ENCODE measurements at regions of chr10 and their contacts with region 1.

Region 1: GRCh38 chr10:100562008-100562711 is 26.4 kb downstream of the HIF1AN start:
- DNase-seq: peak; percentile 66 to 91 (median 76)
- ATAC-seq: peak; percentile 99
- H3K4me3 ChIP-seq: peak overlapping the region; percentile 32
- H3K4me3 Mint-ChIP-seq: peak overlapping the region; percentile 30
- H3K27ac ChIP-seq: no peak overlapping the region
- H3K27ac Mint-ChIP-seq: no peak overlapping the region
- H3K4me1 ChIP-seq: peaks cover 21% of the 10 kb centered on the region
- H3K4me1 Mint-ChIP-seq: peaks cover 23% of the 10 kb centered on the region
- H3K27me3 ChIP-seq: peaks cover 4 to 27% of the 10 kb centered on the region in 2 experiments
- H3K27me3 Mint-ChIP-seq: peaks cover 32% of the 10 kb centered on the region
- CTCF ChIP-seq: peak; percentile 93

Region 2: GRCh38 chr10:100728928-100729861 is 167.0 kb after region 1 on chr10:
- CTCF ChIA-PET with region 1: no interaction called
- POLR2A ChIA-PET with region 1: no interaction called
- intact Hi-C with region 1: loop called in 1 of 2 experiments (anchors 5 kb)
- DNase-seq: peak in 4 of 14 experiments; percentile 10 to 37 (median 23)
- ATAC-seq: peak; percentile 26
- H3K4me3 ChIP-seq: no peak overlapping the region
- H3K4me3 Mint-ChIP-seq: no peak overlapping the region
- H3K27ac ChIP-seq: no peak overlapping the region
- H3K27ac Mint-ChIP-seq: no peak overlapping the region
- H3K4me1 ChIP-seq: peaks cover 27% of the 10 kb centered on the region
- H3K4me1 Mint-ChIP-seq: peaks cover 30% of the 10 kb centered on the region
- H3K27me3 ChIP-seq: peaks cover 64 to 93% of the 10 kb centered on the region in 2 experiments
- H3K27me3 Mint-ChIP-seq: peaks cover 94% of the 10 kb centered on the region
- CTCF ChIP-seq: no peak

Region 3: GRCh38 chr10:100827819-100828737 is 265.9 kb after region 1 on chr10:
- CTCF ChIA-PET with region 1: no interaction called
- POLR2A ChIA-PET with region 1: no interaction called
- intact Hi-C with region 1: loop called in 1 of 2 experiments (anchors 5 kb)
- DNase-seq: peak in 5 of 14 experiments; percentile 17 to 51 (median 31)
- ATAC-seq: peak; percentile 22
- H3K4me3 ChIP-seq: peak overlapping the region; percentile 47
- H3K4me3 Mint-ChIP-seq: peak overlapping the region; percentile 89
- H3K27ac ChIP-seq: no peak overlapping the region
- H3K27ac Mint-ChIP-seq: no peak overlapping the region
- H3K4me1 ChIP-seq: peaks cover 44% of the 10 kb centered on the region
- H3K4me1 Mint-ChIP-seq: peaks cover 42% of the 10 kb centered on the region
- H3K27me3 ChIP-seq: peaks cover 75 to 96% of the 10 kb centered on the region in 2 experiments
- H3K27me3 Mint-ChIP-seq: peaks cover 55% of the 10 kb centered on the region
- CTCF ChIP-seq: no peak

Region 4: DNA sequence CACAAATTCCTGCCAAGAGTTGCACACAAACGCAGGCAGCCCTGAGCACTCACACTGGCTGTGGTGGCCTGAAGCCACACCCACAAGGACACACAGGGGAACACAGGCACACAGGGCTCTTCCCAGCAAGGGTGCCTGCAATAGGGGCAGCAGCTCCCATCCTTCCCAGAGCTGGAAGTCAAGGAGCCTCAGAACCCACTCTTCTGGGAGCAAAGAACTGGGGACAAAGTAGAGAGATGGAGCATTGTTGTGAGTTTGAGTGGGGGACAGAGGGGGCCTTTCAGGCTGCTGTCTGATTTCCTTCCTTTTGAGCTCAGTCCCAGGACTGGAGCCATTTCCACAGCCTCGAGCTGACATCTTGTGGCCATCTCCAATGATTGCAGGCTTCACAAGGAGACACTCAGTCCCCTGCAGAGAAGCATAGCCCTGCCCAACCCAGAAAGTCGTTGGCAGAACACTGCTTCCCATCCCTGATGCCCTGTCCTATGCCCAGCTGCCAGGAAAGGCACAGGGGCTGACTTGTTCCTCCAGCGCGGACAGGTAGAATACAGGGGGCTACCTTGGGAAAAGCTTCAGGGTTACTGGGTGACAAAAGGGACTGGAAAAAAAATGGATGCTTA is 316.2 kb after region 1 on chr10:
- CTCF ChIA-PET with region 1: interaction called, 5 read pairs
- POLR2A ChIA-PET with region 1: no interaction called
- intact Hi-C with region 1: loop called in 1 of 2 experiments (anchors 5 kb)
- DNase-seq: peak in 5 of 14 experiments; percentile 4 to 45 (median 29)
- ATAC-seq: peak; percentile 73
- H3K4me3 ChIP-seq: no peak overlapping the region
- H3K4me3 Mint-ChIP-seq: no peak overlapping the region
- H3K27ac ChIP-seq: no peak overlapping the region
- H3K27ac Mint-ChIP-seq: no peak overlapping the region
- H3K4me1 ChIP-seq: no peaks in the 10 kb centered on the region
- H3K4me1 Mint-ChIP-seq: no peaks in the 10 kb centered on the region
- H3K27me3 ChIP-seq: peaks cover 0 to 2% of the 10 kb centered on the region in 2 experiments
- H3K27me3 Mint-ChIP-seq: peaks cover 11% of the 10 kb centered on the region
- CTCF ChIP-seq: no peak

Region 5: DNA sequence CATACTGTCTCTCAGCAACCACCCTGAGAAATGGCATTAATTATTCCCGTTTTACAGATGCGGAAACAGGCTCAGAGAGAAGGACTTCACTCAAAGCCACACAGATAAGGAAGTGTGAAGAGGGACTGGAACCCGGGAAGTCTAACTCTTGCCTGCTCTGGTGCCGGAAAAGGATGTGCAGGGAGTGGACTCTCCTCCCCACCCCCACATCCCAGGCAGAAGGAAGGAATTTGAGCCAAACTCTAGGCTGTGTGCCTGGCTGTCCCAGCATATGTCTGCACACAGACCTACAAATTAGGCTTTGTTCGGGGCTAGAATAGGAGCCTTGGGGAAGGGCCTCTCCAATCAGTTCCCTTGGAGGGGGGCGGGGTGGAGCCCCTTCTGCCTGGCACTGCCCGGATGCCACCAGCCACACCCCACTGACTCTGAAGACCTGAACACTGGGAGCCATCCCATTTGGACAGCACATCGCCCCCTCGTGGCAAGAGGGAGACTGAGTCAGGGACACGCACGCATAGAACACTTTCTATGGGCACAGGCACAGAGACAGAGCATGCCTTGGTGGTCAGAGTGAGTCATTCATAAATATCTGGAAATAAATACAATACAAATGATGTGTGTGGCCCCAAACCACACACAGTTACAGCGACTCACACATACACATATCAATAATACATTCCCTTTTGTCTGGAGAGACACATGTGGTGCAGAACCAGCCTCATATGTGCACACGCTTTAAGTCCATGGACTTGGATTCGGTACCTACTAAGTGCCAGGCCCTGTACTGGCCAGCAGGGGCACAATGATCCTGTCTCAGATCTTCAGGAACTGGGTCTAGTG is 450.6 kb after region 1 on chr10:
- CTCF ChIA-PET with region 1: interaction called, 3 read pairs
- POLR2A ChIA-PET with region 1: no interaction called
- intact Hi-C with region 1: loop called (anchors 2 kb)
- DNase-seq: peak; percentile 60 to 86 (median 70)
- ATAC-seq: peak; percentile 88
- H3K4me3 ChIP-seq: no peak overlapping the region
- H3K4me3 Mint-ChIP-seq: no peak overlapping the region
- H3K27ac ChIP-seq: no peak overlapping the region
- H3K27ac Mint-ChIP-seq: no peak overlapping the region
- H3K4me1 ChIP-seq: peaks cover 19% of the 10 kb centered on the region
- H3K4me1 Mint-ChIP-seq: peaks cover 16% of the 10 kb centered on the region
- H3K27me3 ChIP-seq: peaks cover 20 to 21% of the 10 kb centered on the region in 2 experiments
- H3K27me3 Mint-ChIP-seq: peaks cover 40% of the 10 kb centered on the region
- CTCF ChIP-seq: peak; percentile 87